PC-9 (cell line): ENCODE measurements at regions of chr5 and their contacts with region 1.

Region 1: GRCh38 chr5:154714266-154714986 is 40.8 kb upstream of the LARP1 start:
- DNase-seq: peak in 1 of 2 experiments; percentile 20
- H3K4me3 ChIP-seq: no peak overlapping the region
- H3K27ac ChIP-seq: peak overlapping the region; percentile 46; the same call in 1 of the 2 replicates
- H3K4me1 ChIP-seq: peaks cover 28% of the 10 kb centered on the region
- H3K27me3 ChIP-seq: no peaks in the 10 kb centered on the region
- CTCF ChIP-seq: no peak

Region 2: GRCh38 chr5:154654486-154655371 is 59.7 kb before region 1 on chr5:
- CTCF ChIA-PET with region 1: no interaction called
- POLR2A ChIA-PET with region 1: interaction called, 6 read pairs
- intact Hi-C with region 1: loop called (anchors 5 kb)
- DNase-seq: no peak
- H3K4me3 ChIP-seq: no peak overlapping the region
- H3K27ac ChIP-seq: no peak overlapping the region
- H3K4me1 ChIP-seq: no peaks in the 10 kb centered on the region
- H3K27me3 ChIP-seq: no peaks in the 10 kb centered on the region
- CTCF ChIP-seq: no peak

Region 3: DNA sequence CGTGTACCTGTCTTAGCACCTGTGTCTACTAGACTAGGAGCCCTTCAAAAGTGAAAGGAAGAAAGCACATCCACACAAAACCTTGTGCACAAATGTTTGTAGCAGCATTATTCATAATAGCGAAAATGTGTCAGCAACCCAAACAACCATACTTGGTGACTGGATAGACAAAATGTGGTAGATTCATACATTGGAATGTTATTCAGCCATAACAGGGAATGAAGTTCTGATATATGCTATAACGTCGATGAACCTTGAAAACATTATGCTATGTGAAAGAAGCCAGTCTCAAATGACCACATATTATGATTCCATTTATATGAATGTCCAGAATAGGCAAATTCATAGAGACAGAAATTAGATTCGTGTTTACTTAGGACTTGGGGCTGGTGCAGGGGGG is 17.1 kb before region 1 on chr5:
- CTCF ChIA-PET with region 1: interaction called, 4 read pairs
- POLR2A ChIA-PET with region 1: interaction called, 4 read pairs
- intact Hi-C with region 1: loop called (anchors 1 kb)
- DNase-seq: no peak
- H3K4me3 ChIP-seq: no peak overlapping the region
- H3K27ac ChIP-seq: no peak overlapping the region
- H3K4me1 ChIP-seq: peaks cover 19% of the 10 kb centered on the region
- H3K27me3 ChIP-seq: no peaks in the 10 kb centered on the region
- CTCF ChIP-seq: no peak

Region 4: DNA sequence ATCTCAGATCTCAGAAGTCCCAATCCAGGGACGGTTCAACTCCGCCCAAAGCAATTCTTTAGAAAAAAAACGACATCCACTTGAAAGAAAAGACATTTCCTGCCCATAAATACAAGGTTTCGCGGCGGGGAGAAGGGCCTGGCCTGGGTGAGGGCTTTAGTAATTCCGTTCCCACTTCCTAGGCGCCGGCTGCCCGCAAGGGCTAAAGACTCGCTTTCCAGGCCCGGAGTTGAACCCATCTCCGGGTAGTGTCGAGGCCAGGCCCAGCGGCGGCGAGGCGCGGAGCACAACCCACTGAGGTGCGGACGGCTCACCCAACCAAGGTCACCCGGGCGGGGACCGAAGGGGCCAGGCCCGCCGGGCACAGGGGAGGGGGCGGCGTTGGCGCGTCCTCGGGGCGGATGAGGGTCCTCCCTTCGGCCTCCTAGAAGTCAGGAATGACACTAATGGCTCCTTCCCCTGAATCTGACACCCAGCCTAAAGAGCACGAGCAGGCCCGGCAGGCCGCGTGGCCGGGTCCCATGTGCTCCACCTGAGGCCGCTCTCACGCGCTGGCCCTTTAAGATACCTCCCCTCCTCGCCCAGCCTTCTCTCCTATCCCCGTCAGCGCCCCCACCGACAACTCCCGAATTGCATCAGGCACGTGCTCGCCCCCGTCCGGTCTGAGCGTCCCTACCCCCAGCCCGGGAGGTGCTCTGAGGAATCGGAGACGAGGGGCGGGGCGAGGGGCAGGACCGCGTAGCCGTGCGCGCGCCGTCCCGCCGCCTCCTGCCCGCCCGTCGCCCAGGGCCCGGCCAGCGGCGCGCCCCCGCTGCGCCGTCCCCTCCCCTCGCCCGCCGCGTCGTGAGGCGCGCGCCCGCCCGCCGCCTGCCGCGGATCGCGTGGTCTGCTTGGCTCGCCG is 40.3 kb after region 1 on chr5:
- CTCF ChIA-PET with region 1: no interaction called
- POLR2A ChIA-PET with region 1: interaction called, 4 read pairs
- intact Hi-C with region 1: loop called (anchors 2 kb)
- DNase-seq: peak; percentile 96 to 100
- H3K4me3 ChIP-seq: peak overlapping the region; percentile 77
- H3K27ac ChIP-seq: peak overlapping the region; percentile 95
- H3K4me1 ChIP-seq: peaks cover 33% of the 10 kb centered on the region
- H3K27me3 ChIP-seq: no peaks in the 10 kb centered on the region
- CTCF ChIP-seq: no peak; the same call in 1 of the 2 replicates

Region 5: DNA sequence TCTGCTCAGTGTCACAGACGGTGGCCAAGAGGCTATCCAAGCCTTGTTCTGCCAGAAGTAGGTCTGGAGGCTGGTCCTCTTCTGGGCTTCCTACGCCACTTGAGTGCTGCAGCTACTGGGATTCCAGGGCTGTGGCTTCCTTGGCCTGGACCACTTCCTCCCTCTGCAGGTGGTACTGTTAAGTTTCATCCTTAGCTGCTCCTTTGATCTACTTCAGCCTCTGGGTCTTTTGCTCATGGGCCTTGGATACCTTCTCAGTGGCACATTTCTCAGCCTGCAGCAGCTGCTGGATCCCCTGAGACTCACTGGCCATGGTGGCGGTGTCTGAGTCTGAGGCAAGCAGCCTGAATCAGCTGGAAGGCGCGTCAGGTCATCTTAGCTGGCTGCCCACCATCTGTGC is 154.3 kb after region 1 on chr5:
- CTCF ChIA-PET with region 1: interaction called, 16 read pairs
- POLR2A ChIA-PET with region 1: no interaction called
- intact Hi-C with region 1: no loop called
- DNase-seq: no peak
- H3K4me3 ChIP-seq: no peak overlapping the region
- H3K27ac ChIP-seq: no peak overlapping the region
- H3K4me1 ChIP-seq: no peaks in the 10 kb centered on the region
- H3K27me3 ChIP-seq: no peaks in the 10 kb centered on the region
- CTCF ChIP-seq: no peak